ENCODE measurements at regions of chr10 and their contacts with region 1.

Region 1: DNA sequence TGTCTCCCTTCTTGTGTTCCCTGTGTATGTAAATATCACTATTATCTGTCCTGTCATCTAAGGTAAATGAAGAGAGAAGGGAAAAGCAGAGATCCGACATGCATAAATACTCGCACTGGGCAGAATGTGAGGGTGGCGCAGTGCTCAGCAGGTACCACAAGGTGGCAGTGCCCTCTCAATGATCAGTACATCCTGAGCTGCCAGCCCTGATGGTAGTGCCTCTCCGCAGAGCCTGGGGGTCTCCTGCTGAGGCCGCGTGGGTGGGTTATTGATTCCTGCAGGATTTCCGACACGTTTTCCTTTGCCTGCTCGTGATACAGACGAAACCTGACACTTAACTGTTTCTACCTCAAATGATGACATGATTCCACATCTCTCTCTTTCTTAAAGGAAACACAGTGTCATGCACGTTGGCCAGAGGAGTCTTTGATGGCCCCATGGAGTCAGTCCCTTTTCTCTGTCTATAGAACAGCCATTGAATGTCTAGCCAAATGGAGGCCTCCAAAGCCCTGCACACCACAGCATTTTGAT is 19.8 kb downstream of the RGR start:
- DNase-seq: peak; percentile 47
- ATAC-seq: peak; percentile 88
- H3K4me3 Mint-ChIP-seq: no peak overlapping the region
- H3K27ac Mint-ChIP-seq: no peak overlapping the region
- H3K4me1 Mint-ChIP-seq: no peaks in the 10 kb centered on the region
- H3K27me3 Mint-ChIP-seq: peaks cover 43% of the 10 kb centered on the region
- CTCF ChIP-seq: peak; percentile 55

Region 2: DNA sequence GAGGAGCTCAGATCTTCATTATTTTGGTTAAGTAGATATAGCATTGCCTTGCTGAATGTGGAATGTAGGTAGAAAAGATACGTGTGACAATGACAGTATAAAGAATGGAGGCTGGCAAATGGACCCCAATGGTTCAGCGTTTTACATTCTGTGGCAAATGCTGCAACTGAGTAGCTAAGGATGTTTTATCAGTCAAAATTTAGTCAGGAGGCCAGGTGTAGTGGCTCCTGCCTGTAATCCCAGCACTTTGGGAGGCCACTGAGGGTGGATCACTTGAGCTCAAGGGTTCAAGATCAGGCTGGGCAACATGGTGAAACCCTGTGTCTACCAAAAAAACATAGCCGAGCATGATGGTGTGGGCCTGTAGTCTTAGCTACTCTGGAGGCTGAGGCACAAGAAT is 245.8 kb before region 1 on chr10:
- CTCF ChIA-PET with region 1: no interaction called
- POLR2A ChIA-PET with region 1: no interaction called
- intact Hi-C with region 1: no loop called
- DNase-seq: no peak
- ATAC-seq: no peak
- H3K4me3 Mint-ChIP-seq: no peak overlapping the region
- H3K27ac Mint-ChIP-seq: no peak overlapping the region
- H3K4me1 Mint-ChIP-seq: no peaks in the 10 kb centered on the region
- H3K27me3 Mint-ChIP-seq: peaks cover 8% of the 10 kb centered on the region
- CTCF ChIP-seq: no peak

Region 3: GRCh38 chr10:84375011-84375410 is 110.3 kb after region 1 on chr10:
- CTCF ChIA-PET with region 1: no interaction called
- POLR2A ChIA-PET with region 1: no interaction called
- intact Hi-C with region 1: loop called (anchors 1 kb)
- DNase-seq: no peak
- ATAC-seq: no peak
- H3K4me3 Mint-ChIP-seq: no peak overlapping the region
- H3K27ac Mint-ChIP-seq: no peak overlapping the region
- H3K4me1 Mint-ChIP-seq: peaks cover 5% of the 10 kb centered on the region
- H3K27me3 Mint-ChIP-seq: no peaks in the 10 kb centered on the region
- CTCF ChIP-seq: peak; percentile 91

Measured in activated B cell treated with CpG ODN at 0.5 μM for 24 hours (primary cell).